ENCODE measurements at regions of chr13 and their contacts with region 1.

Region 1: GRCh38 chr13:50801087-50801931 is 42.2 kb downstream of the DLEU7 start:
- DNase-seq: peak in 1 of 2 experiments; percentile 47
- H3K4me3 ChIP-seq: no peak overlapping the region
- H3K27ac ChIP-seq: no peak overlapping the region
- H3K4me1 ChIP-seq: peaks cover 6% of the 10 kb centered on the region; the same call in 1 of the 2 replicates
- H3K27me3 ChIP-seq: no peaks in the 10 kb centered on the region
- CTCF ChIP-seq: peak; percentile 76

Region 2: GRCh38 chr13:49976314-49977258 is 824.7 kb before region 1 on chr13:
- CTCF ChIA-PET with region 1: no interaction called
- POLR2A ChIA-PET with region 1: no interaction called
- intact Hi-C with region 1: loop called (anchors 2 kb)
- DNase-seq: peak; percentile 58
- H3K4me3 ChIP-seq: no peak overlapping the region
- H3K27ac ChIP-seq: no peak overlapping the region
- H3K4me1 ChIP-seq: no peaks in the 10 kb centered on the region
- H3K27me3 ChIP-seq: no peaks in the 10 kb centered on the region
- CTCF ChIP-seq: peak; percentile 94

Region 3: GRCh38 chr13:50170447-50171037 is 630.8 kb before region 1 on chr13:
- CTCF ChIA-PET with region 1: no interaction called
- POLR2A ChIA-PET with region 1: no interaction called
- intact Hi-C with region 1: loop called (anchors 10 kb)
- DNase-seq: no peak
- H3K4me3 ChIP-seq: no peak overlapping the region
- H3K27ac ChIP-seq: no peak overlapping the region
- H3K4me1 ChIP-seq: no peaks in the 10 kb centered on the region
- H3K27me3 ChIP-seq: no peaks in the 10 kb centered on the region
- CTCF ChIP-seq: peak; percentile 56

Region 4: DNA sequence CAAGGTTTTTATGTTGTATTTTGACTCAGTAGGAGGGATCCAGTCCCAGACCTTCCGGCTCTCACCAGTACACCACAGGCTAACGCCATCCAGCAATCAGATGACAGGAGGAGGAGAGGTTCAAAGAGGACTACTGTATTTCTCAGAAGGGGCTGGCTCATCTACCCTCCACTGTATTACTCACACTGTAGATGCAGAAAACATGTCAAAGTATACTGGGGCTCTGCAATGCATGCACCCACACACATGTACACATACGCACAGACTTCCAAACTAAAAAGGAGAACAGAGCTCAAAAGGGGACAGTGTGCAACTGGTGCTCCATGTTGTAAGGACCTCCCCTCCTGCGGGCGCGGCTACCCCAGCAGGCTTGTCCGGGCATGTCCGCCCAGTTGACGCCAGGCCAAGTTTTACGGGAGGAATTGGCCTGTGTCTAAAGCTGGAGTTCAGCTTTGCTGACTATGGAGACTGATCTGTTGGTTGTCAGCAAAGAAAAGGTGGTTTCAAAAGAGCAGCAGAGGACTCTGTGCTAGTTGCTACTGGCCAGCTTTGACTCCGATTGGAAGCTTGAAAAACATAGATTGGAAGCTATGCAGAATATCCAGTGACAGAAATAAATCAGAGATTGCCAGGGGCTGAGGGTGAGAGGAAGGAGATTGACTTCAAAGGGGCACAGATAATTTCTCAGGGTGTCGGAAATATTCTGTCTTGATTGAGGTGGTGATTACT is 272.0 kb before region 1 on chr13:
- CTCF ChIA-PET with region 1: no interaction called
- POLR2A ChIA-PET with region 1: no interaction called
- intact Hi-C with region 1: loop called (anchors 1 kb)
- DNase-seq: peak in 1 of 2 experiments; percentile 67
- H3K4me3 ChIP-seq: no peak overlapping the region
- H3K27ac ChIP-seq: no peak overlapping the region
- H3K4me1 ChIP-seq: no peaks in the 10 kb centered on the region
- H3K27me3 ChIP-seq: no peaks in the 10 kb centered on the region
- CTCF ChIP-seq: no peak

Region 5: DNA sequence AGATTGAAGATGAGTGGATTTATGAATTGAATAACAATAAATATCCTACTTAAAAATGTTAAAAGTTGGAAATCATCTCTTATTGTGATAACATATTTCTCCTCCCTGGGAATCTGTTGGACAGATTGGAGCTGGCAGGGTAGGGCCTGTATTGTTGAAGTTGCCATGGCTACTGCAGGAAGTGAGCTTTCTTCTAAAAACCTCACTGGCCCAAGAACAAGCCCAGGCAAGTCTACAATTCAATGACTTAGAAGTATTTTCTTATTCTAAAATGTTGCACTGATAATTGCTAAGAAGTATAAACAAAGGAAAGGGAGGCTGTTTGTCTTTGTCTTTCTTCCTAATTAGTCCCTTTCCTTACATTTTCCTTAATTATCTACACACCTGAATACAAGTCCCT is 69.9 kb before region 1 on chr13:
- CTCF ChIA-PET with region 1: no interaction called
- POLR2A ChIA-PET with region 1: interaction called, 16 read pairs
- intact Hi-C with region 1: no loop called
- DNase-seq: peak in 1 of 2 experiments; percentile 42
- H3K4me3 ChIP-seq: no peak overlapping the region
- H3K27ac ChIP-seq: no peak overlapping the region
- H3K4me1 ChIP-seq: no peaks in the 10 kb centered on the region
- H3K27me3 ChIP-seq: no peaks in the 10 kb centered on the region
- CTCF ChIP-seq: no peak